ENCODE measurements at regions of chr12 and their contacts with region 1.

Region 1: DNA sequence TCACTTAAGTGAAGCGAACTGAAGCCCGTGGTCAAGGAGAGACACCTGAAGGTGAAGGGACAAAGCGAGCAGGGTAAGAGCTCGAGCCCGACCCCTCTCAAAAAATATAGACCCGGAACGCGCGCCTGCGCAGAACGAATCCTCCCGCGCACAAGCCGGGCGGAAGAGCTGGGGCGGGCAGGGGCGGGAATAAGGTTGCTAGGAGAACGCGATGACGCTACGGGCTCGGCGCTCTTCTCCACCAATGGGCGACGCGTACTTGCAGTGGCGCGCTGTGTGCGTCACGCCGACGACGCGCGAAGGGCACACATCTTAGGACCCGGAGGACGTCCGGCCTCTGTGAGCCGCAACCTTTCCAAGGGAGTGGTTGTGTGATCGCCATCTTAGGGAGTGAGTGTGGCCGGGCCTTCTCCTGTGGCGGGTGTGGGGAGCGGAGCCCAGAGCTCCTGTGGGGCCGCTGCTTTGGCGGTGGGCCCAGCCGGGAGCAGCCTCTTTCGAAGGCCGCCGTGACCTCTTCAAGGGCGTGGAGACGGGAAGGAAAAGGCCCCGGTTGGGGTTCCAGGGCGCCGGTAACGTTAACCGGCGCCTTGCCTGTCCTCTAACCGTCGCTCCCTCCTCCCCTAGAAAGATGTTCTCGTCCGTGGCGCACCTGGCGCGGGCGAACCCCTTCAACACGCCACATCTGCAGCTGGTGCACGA is at the start of gene SLC25A3:
- DNase-seq: peak; percentile 98
- H3K4me3 ChIP-seq: peak within 1 kb of the TSS; percentile 74 to 93 (median 85)
- H3K27ac ChIP-seq: peak within 1 kb of the TSS; percentile 98 to 100 (median 98)
- H3K4me1 ChIP-seq: peaks cover 12 to 51% (median 34%) of the 10 kb centered on the region in 6 donors
- H3K27me3 ChIP-seq: no peaks in the 10 kb centered on the region
- CTCF ChIP-seq: peak in 2 of 11 experiments; percentile 13 to 27
- POLR2A ChIP-seq: peak; percentile 65 to 97 (median 95)
- total RNA-seq, gene SLC25A3: 265 to 443 (median 310) TPM

Region 2: GRCh38 chr12:98516184-98516873 is 77.2 kb before region 1 on chr12:
- intact Hi-C with region 1: no loop called
- DNase-seq: peak; percentile 93
- H3K4me3 ChIP-seq: peak overlapping the region; percentile 90 to 99 (median 95)
- H3K27ac ChIP-seq: peak overlapping the region; percentile 95 to 98 (median 98)
- H3K4me1 ChIP-seq: peaks cover 33 to 74% (median 67%) of the 10 kb centered on the region in 6 donors
- H3K27me3 ChIP-seq: no peaks in the 10 kb centered on the region
- CTCF ChIP-seq: peak in 10 of 11 experiments; percentile 29 to 79 (median 70)
- POLR2A ChIP-seq: no peak

Region 3: GRCh38 chr12:98644711-98645402 is 51.4 kb after region 1 on chr12 and contains the starts of genes APAF1 and IKBIP:
- intact Hi-C with region 1: loop called (anchors 5 kb)
- DNase-seq: peak; percentile 100
- H3K4me3 ChIP-seq: peak within 1 kb of the TSS; percentile 89 to 99 (median 96)
- H3K27ac ChIP-seq: peak within 1 kb of the TSS; percentile 74 to 98 (median 96)
- H3K4me1 ChIP-seq: peaks cover 16 to 76% (median 40%) of the 10 kb centered on the region in 6 donors
- H3K27me3 ChIP-seq: no peaks in the 10 kb centered on the region
- CTCF ChIP-seq: peak in 1 of 11 experiments; percentile 38
- POLR2A ChIP-seq: peak; percentile 11 to 67 (median 42)
- total RNA-seq, gene APAF1: 27.9 to 44.1 (median 36.0) TPM
- total RNA-seq, gene IKBIP: 17.2 to 30.7 (median 19.9) TPM

Measured in spleen (tissue), 13 donors.